ENCODE measurements at regions of chr6 and their contacts with region 1.

Region 1: GRCh38 chr6:108558372-108559096 is 2.2 kb upstream of the FOXO3 start:
- DNase-seq: peak; percentile 98 to 100 (median 99)
- ATAC-seq: peak; percentile 72 to 79 (median 73)
- H3K4me3 ChIP-seq: peak overlapping the region; percentile 81 to 99 (median 96)
- H3K27ac ChIP-seq: peak overlapping the region; percentile 94 to 100 (median 99)
- H3K4me1 ChIP-seq: peaks cover 0 to 40% (median 24%) of the 10 kb centered on the region in 12 donors
- H3K27me3 ChIP-seq: no peaks in the 10 kb centered on the region
- CTCF ChIP-seq: no peak
- POLR2A ChIP-seq: peak in 1 of 2 donors; percentile 65

Region 2: GRCh38 chr6:108609276-108609769 is 50.8 kb after region 1 on chr6:
- intact Hi-C with region 1: loop called in 1 of 10 experiments (anchors 5 kb)
- DNase-seq: no peak
- ATAC-seq: peak; percentile 18 to 87 (median 56)
- H3K4me3 ChIP-seq: no peak overlapping the region
- H3K27ac ChIP-seq: peak overlapping the region; percentile 8 to 73 (median 39)
- H3K4me1 ChIP-seq: peaks cover 13 to 88% (median 65%) of the 10 kb centered on the region in 12 donors
- H3K27me3 ChIP-seq: no peaks in the 10 kb centered on the region
- CTCF ChIP-seq: no peak
- POLR2A ChIP-seq: no peak

Region 3: GRCh38 chr6:108782179-108783041 is 223.9 kb after region 1 on chr6:
- intact Hi-C with region 1: loop called in 9 of 10 experiments (anchors 1 to 5 kb)
- DNase-seq: peak; percentile 81 to 88 (median 83)
- ATAC-seq: peak; percentile 85 to 96 (median 94)
- H3K4me3 ChIP-seq: peak overlapping the region in 11 of 12 donors; percentile 4 to 66 (median 54)
- H3K27ac ChIP-seq: peak overlapping the region in 4 of 12 donors; percentile 25 to 68 (median 55)
- H3K4me1 ChIP-seq: peaks cover 0 to 15% (median 6%) of the 10 kb centered on the region in 12 donors
- H3K27me3 ChIP-seq: no peaks in the 10 kb centered on the region
- CTCF ChIP-seq: peak; percentile 65 to 88 (median 78)
- POLR2A ChIP-seq: no peak

Region 4: GRCh38 chr6:108896111-108896661 is 337.7 kb after region 1 on chr6:
- intact Hi-C with region 1: loop called in 4 of 10 experiments (anchors 5 kb)
- DNase-seq: no peak
- ATAC-seq: peak in 3 of 4 donors; percentile 29 to 45 (median 31)
- H3K4me3 ChIP-seq: no peak overlapping the region
- H3K27ac ChIP-seq: peak overlapping the region; percentile 40 to 90 (median 66)
- H3K4me1 ChIP-seq: peaks cover 0 to 58% (median 26%) of the 10 kb centered on the region in 12 donors
- H3K27me3 ChIP-seq: no peaks in the 10 kb centered on the region
- CTCF ChIP-seq: no peak
- POLR2A ChIP-seq: no peak

Region 5: DNA sequence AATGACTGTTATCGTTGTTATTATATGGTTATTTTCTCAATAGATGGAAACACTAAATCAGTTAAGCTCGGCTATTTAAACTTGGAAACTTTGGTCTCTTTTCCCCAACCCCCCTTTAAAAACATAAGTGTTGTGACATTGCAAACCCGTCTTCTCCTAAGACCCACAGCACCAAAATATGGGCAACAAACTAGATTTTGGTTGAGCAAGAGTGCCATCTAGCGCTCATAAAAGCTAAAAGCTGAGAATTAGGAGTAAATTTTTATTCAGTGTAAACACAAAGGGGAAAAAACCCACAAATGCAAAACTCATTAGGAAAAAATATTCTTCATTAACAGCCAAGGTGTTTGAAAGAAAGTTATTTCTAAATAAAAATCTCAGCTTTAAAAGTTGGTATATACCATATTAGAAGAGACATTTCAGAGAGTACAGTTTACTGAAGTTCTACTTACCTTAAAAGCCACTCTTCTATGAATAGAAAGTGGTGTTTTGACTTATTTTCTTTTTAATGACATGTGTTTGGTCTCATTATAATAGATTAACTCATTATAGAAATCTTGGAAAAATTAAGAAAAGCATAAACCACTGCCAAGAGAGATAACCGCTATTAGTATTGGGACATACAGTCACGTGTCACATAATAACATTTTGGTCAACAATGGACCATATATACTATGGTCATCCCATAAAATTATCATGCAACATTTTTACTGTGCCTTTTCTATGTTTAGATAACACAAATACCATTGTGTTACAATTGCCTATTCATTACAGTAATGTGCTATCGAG is 515.0 kb after region 1 on chr6:
- intact Hi-C with region 1: loop called in 3 of 10 experiments (anchors 5 kb)
- DNase-seq: peak in 2 of 5 donors; percentile 42 to 46
- ATAC-seq: peak; percentile 43 to 64 (median 58)
- H3K4me3 ChIP-seq: no peak overlapping the region
- H3K27ac ChIP-seq: peak overlapping the region in 6 of 12 donors; percentile 2 to 34 (median 22)
- H3K4me1 ChIP-seq: peaks cover 0 to 63% (median 26%) of the 10 kb centered on the region in 12 donors
- H3K27me3 ChIP-seq: no peaks in the 10 kb centered on the region
- CTCF ChIP-seq: peak; percentile 48 to 79 (median 66)
- POLR2A ChIP-seq: no peak

Region 6: GRCh38 chr6:109382576-109383437 is 824.3 kb after region 1 on chr6:
- intact Hi-C with region 1: loop called in 2 of 10 experiments (anchors 5 to 10 kb)
- DNase-seq: peak; percentile 94 to 97 (median 95)
- ATAC-seq: peak; percentile 92 to 95 (median 93)
- H3K4me3 ChIP-seq: peak overlapping the region; percentile 70 to 99 (median 96)
- H3K27ac ChIP-seq: peak overlapping the region; percentile 97 to 100 (median 99)
- H3K4me1 ChIP-seq: peaks cover 0 to 44% (median 25%) of the 10 kb centered on the region in 12 donors
- H3K27me3 ChIP-seq: no peaks in the 10 kb centered on the region
- CTCF ChIP-seq: peak; percentile 34 to 74 (median 60)
- POLR2A ChIP-seq: no peak

Measured in heart left ventricle (tissue), 16 donors.